ENCODE measurements at regions of chr12 and their contacts with region 1.

Region 1: DNA sequence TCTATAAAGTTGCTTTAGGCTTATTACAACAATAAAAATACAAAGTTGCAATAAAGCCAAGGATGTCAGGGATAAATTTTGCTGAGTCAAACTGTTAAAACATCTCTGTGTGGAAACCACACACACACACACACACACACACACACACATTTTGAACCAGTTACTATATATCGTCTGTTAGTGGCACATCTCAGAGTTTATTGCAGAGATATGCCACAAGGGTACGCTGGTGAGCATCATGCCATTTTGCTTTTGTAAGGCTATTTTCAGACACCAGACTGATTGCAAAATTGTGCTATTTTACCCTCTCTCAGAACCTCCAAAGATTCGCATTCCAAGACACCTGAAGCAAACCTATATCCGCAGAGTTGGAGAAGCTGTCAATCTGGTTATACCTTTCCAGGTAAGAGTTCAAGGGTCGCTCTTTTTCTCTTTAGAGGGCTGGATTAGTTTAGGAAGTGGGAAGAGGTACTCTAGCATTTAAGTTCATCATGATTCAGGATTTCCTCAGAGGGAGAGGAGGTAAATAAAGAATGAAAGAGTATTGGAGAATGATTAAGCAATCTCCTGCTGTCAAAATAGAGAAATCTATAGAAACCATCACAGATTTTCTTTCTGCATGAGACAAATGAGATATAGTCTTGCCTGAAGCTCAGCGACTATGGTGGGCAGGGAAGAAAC is 27.3 kb upstream of the CHPT1 start:
- DNase-seq: peak; percentile 66
- ATAC-seq: peak; percentile 74
- H3K4me3 ChIP-seq: peak overlapping the region in 1 of 3 experiments; percentile 9; a peak in 1 of 6 replicates
- H3K27ac ChIP-seq: peak overlapping the region; percentile 43
- H3K4me1 ChIP-seq: peaks cover 72% of the 10 kb centered on the region
- H3K27me3 ChIP-seq: no peaks in the 10 kb centered on the region
- CTCF ChIP-seq: peak; percentile 77
- EP300 ChIP-seq: no peak
- POLR2A ChIP-seq: no peak
- RAD21 ChIP-seq: peak; percentile 74

Region 2: DNA sequence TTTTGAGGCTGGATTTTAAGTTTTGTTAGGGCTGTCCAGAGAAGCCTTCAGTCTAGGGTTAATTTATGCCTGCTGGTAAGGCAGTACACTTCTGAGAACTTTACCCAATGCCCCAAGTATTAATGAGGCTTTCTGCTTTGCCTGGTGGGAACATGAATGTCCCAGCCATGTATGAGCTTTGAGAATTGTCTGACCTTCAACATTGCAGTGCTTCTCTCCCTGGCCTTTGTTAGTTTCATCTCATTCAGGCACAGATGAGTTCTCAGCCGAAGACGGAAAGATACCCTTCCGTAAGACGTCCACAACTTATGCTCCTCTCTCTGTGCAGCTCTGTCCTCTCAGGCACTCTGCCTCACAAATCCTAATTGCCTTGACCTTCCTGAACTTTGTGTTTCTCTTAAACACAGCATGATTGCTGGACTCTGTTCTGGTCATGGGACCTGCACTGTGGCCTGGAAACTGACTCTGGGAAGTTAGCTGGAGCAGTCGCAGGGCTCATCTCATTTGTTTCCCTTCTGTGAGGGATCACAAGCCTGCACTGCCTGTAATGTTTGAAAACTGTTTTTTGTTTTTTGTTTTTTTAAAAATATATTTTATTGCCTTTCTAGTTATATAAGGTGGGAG is 43.0 kb after region 1 on chr12:
- CTCF ChIA-PET with region 1: no interaction called
- POLR2A ChIA-PET with region 1: no interaction called
- in situ Hi-C with region 1: no loop called
- intact Hi-C with region 1: loop called (anchors 5 kb)
- DNase-seq: peak; percentile 85
- ATAC-seq: peak; percentile 97
- H3K4me3 ChIP-seq: peak overlapping the region; percentile 25 to 51 (median 35)
- H3K27ac ChIP-seq: peak overlapping the region; percentile 70
- H3K4me1 ChIP-seq: peaks cover 62% of the 10 kb centered on the region
- H3K27me3 ChIP-seq: no peaks in the 10 kb centered on the region; a peak in 1 of 5 replicates
- CTCF ChIP-seq: peak; percentile 20; the same call in 1 of the 2 replicates
- EP300 ChIP-seq: peak in 1 of 2 experiments; percentile 77; a peak in 2 of 4 replicates
- POLR2A ChIP-seq: peak in 1 of 2 experiments; percentile 26; a peak in 1 of 4 replicates
- RAD21 ChIP-seq: no peak

Region 3: DNA sequence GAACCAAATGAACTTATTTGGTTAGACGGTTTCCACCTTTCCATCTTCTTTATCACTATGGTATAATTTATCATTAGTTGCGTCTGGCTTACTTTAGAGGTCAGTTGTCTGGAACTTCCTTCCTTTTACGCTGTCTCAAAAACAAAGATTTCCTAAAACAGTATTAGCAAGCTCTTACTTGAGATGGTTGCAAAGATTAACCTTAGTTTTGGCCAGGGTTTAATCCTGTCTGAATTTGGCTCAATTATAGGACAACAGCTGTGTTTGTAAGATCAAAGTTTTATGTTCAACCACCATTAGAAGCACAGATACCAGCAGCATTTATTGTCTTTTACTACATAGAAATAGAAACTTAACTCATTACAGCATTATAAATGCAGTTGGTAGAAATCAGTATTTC is 399.6 kb after region 1 on chr12:
- CTCF ChIA-PET with region 1: no interaction called
- POLR2A ChIA-PET with region 1: no interaction called
- in situ Hi-C with region 1: no loop called
- intact Hi-C with region 1: no loop called
- DNase-seq: no peak
- ATAC-seq: no peak
- H3K4me3 ChIP-seq: no peak overlapping the region
- H3K27ac ChIP-seq: no peak overlapping the region
- H3K4me1 ChIP-seq: no peaks in the 10 kb centered on the region
- H3K27me3 ChIP-seq: no peaks in the 10 kb centered on the region
- CTCF ChIP-seq: no peak
- EP300 ChIP-seq: no peak
- POLR2A ChIP-seq: no peak
- RAD21 ChIP-seq: no peak